ENCODE measurements at regions of chrX and their contacts with region 1.

Region 1: DNA sequence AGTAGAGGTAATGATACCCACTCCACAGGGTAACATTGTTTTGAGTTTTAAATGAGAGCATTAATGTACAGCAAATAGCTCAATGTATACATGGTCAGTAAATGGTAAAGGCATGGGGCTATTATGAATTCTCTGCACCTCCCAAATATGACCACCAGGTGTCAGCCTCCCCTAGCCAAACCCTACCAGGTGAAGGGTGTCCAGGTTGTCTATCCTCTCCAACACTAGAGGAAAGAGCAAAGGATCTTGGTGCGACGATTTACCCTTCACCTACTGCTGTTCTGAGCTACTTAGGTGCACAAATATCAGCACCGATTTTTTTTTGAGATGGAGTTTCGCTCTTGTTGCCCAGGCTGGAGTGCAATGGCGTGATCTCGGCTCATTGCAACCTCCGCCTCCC is 26.5 kb upstream of the XIAP start:
- H3K4me3 ChIP-seq: no peak overlapping the region
- H3K27ac ChIP-seq: no peak overlapping the region
- H3K4me1 ChIP-seq: 0 out of 2 replicates have a peak, but pooled peaks cover 2% of the 10 kb centered on the region
- CTCF ChIP-seq: peak; percentile 68; the same call in 1 of the 2 replicates

Region 2: GRCh38 chrX:123732670-123733363 is 100.6 kb before region 1 on chrX and contains the start of gene THOC2:
- CTCF ChIA-PET with region 1: no interaction called
- POLR2A ChIA-PET with region 1: no interaction called
- H3K4me3 ChIP-seq: peak within 1 kb of the TSS; percentile 80
- H3K27ac ChIP-seq: peak within 1 kb of the TSS; percentile 72
- H3K4me1 ChIP-seq: 0 out of 2 replicates have a peak, but pooled peaks cover 3% of the 10 kb centered on the region
- CTCF ChIP-seq: peak; percentile 74; the same call in 1 of the 2 replicates

Region 3: GRCh38 chrX:123771449-123772064 is 61.8 kb before region 1 on chrX:
- CTCF ChIA-PET with region 1: interaction called, 17 read pairs
- POLR2A ChIA-PET with region 1: no interaction called
- H3K4me3 ChIP-seq: no peak overlapping the region
- H3K27ac ChIP-seq: no peak overlapping the region
- H3K4me1 ChIP-seq: no peaks in the 10 kb centered on the region
- CTCF ChIP-seq: no peak

Region 4: GRCh38 chrX:123822965-123823364 is 10.4 kb before region 1 on chrX:
- CTCF ChIA-PET with region 1: interaction called, 17 read pairs
- POLR2A ChIA-PET with region 1: no interaction called
- H3K4me3 ChIP-seq: no peak overlapping the region
- H3K27ac ChIP-seq: no peak overlapping the region
- H3K4me1 ChIP-seq: no peaks in the 10 kb centered on the region
- CTCF ChIP-seq: no peak

Region 5: DNA sequence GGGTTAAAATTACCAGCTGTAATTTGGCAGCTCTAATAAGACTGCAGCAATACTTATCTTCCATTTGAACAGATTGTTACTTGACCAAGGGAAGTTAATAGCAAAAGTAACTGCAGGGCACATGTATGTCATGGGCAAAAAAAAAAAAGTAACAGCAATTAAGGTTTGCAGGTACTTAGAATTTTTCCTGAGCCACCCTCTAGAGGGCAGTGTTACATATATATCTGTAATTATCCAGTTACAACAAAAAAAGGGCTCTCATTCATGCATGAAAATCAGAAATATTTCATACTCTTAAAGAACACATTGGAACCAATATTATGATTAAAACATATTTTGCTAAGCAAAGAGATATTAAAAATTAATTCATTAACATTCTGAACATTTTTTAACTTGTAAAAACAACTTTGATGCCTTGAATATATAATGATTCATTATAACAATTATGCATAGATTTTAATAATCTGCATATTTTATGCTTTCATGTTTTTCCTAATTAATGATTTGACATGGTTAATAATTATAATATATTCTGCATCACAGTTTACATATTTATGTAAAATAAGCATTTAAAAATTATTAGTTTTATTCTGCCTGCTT is 51.5 kb after region 1 on chrX:
- CTCF ChIA-PET with region 1: interaction called, 14 read pairs
- POLR2A ChIA-PET with region 1: no interaction called
- H3K4me3 ChIP-seq: no peak overlapping the region
- H3K27ac ChIP-seq: no peak overlapping the region
- H3K4me1 ChIP-seq: peaks cover 5% of the 10 kb centered on the region; the same call in 1 of the 2 replicates
- CTCF ChIP-seq: no peak

Region 6: GRCh38 chrX:123960042-123960611 is 126.7 kb after region 1 on chrX:
- CTCF ChIA-PET with region 1: interaction called, 23 read pairs
- POLR2A ChIA-PET with region 1: no interaction called
- H3K4me3 ChIP-seq: peak overlapping the region; percentile 72
- H3K27ac ChIP-seq: peak overlapping the region; percentile 99
- H3K4me1 ChIP-seq: no peaks in the 10 kb centered on the region
- CTCF ChIP-seq: peak; percentile 92

Region 7: DNA sequence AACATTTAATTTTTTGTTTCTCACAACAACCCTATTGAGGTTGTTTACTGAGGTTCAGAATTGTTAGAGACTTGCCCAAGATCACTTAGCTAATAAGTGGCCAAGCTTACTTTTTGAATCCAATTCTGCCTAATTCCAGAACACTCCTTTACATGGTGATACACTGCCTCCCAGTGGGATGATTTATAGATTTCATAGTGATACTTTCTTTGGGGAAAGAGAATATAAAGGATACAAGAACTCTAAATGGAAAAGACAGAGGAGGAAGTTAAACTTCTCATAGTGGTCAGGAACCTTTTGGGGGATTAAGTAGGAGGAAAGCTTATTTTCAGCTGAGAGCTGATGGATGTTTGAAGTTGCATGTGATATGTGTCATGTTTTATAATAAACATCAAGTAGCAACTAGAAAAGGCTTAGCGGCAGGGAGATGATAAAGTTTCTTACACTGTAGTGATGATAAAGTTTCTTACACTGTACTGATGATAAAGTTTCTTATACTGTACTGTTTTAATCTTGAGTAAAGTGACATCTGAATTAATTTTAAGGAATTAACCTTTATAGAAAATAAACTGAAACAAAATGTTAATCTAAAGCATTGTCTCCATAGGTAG is 143.4 kb after region 1 on chrX:
- CTCF ChIA-PET with region 1: interaction called, 14 read pairs
- POLR2A ChIA-PET with region 1: no interaction called
- H3K4me3 ChIP-seq: no peak overlapping the region
- H3K27ac ChIP-seq: no peak overlapping the region
- H3K4me1 ChIP-seq: peaks cover 16% of the 10 kb centered on the region
- CTCF ChIP-seq: peak; percentile 51